ENCODE measurements at regions of chr17 and their contacts with region 1.

Region 1: DNA sequence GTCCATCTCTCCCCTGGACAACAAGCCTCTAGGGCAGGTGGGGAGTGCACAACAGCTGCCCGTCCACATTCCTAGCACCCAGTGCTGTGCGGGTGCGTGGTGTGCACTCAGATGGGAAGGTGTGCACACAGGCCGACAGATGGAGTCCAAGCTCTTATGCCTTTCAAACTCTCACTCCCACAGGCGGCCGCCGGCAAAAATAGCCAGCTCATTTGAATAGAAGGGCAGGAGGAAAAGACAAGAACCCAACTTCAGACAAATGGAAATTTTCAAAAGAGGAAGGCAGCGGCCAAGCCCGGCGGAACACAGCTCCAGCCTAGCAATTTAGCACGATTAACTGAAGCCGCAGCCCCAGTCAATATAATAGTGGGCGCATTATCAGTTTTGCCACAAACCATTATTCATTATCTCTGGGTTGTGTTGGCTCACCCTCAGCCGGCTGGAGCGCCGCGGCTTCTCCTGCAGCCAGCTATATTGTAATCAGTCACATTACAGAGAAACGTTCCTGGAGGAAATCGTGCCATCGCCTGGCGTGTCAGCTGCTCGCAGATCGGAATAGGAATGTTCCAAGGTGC is 103.9 kb upstream of the SEC14L1 start:
- DNase-seq: no peak
- H3K4me3 ChIP-seq: peak overlapping the region in 1 of 3 donors; percentile 33
- H3K27ac ChIP-seq: no peak overlapping the region
- H3K4me1 ChIP-seq: no peaks in the 10 kb centered on the region
- H3K27me3 ChIP-seq: peaks cover 0 to 2% of the 10 kb centered on the region in 2 donors
- CTCF ChIP-seq: no peak
- POLR2A ChIP-seq: no peak

Region 2: GRCh38 chr17:76345377-76345974 is 691.4 kb before region 1 on chr17:
- intact Hi-C with region 1: loop called (anchors 5 kb)
- DNase-seq: peak in 1 of 2 donors; percentile 6
- H3K4me3 ChIP-seq: no peak overlapping the region
- H3K27ac ChIP-seq: no peak overlapping the region
- H3K4me1 ChIP-seq: no peaks in the 10 kb centered on the region
- H3K27me3 ChIP-seq: no peaks in the 10 kb centered on the region
- CTCF ChIP-seq: no peak
- POLR2A ChIP-seq: no peak

Region 3: GRCh38 chr17:77088455-77089123 is 51.7 kb after region 1 on chr17:
- intact Hi-C with region 1: no loop called
- DNase-seq: peak; percentile 77 to 89
- H3K4me3 ChIP-seq: peak overlapping the region; percentile 70 to 79 (median 72)
- H3K27ac ChIP-seq: peak overlapping the region; percentile 83 to 86
- H3K4me1 ChIP-seq: peaks cover 0 to 3% of the 10 kb centered on the region in 2 donors
- H3K27me3 ChIP-seq: no peaks in the 10 kb centered on the region
- CTCF ChIP-seq: peak; percentile 58 to 67 (median 62)
- POLR2A ChIP-seq: no peak